ENCODE measurements at regions of chr20 and their contacts with region 1.

Region 1: GRCh38 chr20:44092551-44093248 is 94.3 kb downstream of the JPH2 start:
- DNase-seq: peak; percentile 38
- H3K4me3 ChIP-seq: no peak overlapping the region
- H3K27ac ChIP-seq: no peak overlapping the region
- H3K4me1 ChIP-seq: peaks cover 21% of the 10 kb centered on the region
- H3K27me3 ChIP-seq: no peaks in the 10 kb centered on the region
- CTCF ChIP-seq: peak; percentile 52 to 55

Region 2: DNA sequence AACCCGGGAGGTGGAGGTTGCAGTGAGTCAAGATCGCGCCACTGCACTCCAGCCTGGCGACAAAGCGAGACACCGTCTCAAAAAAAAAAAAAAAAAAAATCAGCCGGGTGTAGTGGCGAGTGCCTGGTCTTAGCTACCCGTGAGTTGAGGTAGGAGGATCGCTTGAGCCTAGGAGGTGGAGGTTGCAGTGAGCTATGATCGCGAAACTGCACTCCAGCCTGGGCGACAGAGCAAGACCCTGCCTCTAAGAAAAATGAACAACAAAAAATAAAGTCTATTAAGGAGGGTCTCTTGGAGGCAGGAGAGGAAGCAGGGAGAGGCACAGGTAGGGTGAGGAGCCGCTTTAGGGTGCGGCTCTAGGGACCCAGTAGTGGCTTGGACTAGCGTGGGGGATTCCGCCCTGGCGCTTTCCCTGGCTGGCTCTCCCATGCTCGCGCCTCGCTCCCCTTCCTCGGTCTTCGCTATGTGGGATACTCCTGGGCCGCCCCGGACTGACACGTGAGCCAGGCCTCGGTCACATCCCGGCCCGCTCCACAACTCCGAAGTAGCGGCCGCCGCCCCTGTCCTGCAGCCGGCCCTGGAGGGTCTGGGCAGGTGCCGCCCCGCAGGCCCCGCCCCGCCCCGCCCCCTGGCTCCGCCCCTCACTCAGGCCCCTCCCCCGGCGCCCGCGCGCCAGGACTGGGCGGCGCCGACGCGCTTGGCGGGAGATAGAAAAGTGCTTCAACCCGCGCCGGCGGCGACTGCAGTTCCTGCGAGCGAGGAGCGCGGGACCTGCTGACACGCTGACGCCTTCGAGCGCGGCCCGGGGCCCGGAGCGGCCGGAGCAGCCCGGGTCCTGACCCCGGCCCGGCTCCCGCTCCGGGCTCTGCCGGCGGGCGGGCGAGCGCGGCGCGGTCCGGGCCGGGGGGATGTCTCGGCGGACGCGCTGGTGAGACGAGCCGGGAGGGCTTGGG is 426.0 kb before region 1 on chr20 and contains the start of gene MYBL2:
- CTCF ChIA-PET with region 1: no interaction called
- dilution Hi-C with region 1: loop called (anchors 10 kb)
- in situ Hi-C with region 1: no loop called
- intact Hi-C with region 1: no loop called
- DNase-seq: peak; percentile 56
- H3K4me3 ChIP-seq: peak within 1 kb of the TSS; percentile 32 to 66 (median 64)
- H3K27ac ChIP-seq: peak within 1 kb of the TSS; percentile 4
- H3K4me1 ChIP-seq: peaks cover 18% of the 10 kb centered on the region
- H3K27me3 ChIP-seq: no peaks in the 10 kb centered on the region
- CTCF ChIP-seq: no peak
- total RNA-seq, gene MYBL2: 1.8 to 33.5 TPM